T-cell (primary cell): ENCODE measurements at regions of chr20 and their contacts with region 1.

Region 1: DNA sequence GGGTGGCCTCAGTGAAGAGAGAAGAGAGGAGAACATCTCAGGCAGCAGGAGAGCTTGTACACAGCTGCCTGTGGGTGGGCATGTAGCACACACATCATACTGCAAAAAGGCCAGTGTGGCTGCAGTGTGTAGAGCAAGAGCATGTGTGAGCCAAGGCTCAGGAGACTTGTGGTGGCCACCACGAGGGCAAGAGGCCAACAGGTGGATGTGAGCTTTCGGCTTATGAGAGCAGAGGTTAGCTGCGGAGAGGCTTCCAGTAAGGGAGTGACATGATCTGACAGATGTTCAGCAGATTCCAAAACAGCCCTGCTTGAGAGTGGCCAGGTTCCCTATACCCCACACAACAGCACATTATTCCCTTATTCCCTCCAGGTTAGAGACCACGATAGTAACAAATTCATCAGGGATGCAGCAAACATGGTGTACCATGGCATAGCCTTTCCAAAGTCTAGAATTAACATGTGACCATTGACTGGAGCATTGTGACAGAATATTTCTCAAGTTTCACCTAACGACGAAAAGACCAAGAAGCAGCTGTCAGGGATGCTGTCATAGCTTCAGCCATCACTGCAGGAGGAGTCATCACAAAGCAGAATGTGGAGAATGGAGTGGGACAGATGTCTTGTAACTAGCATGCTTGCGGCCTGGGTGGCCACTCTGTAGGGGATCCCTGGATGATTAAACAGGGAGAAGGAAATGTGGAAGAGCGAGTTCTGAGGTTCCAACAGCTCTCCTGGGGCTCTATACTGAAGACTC is 23.1 kb downstream of the HM13 start:
- DNase-seq: no peak
- ATAC-seq: no peak
- H3K4me3 ChIP-seq: no peak overlapping the region
- H3K4me3 Mint-ChIP-seq: no peak overlapping the region
- H3K27ac ChIP-seq: no peak overlapping the region
- H3K27ac Mint-ChIP-seq: no peak overlapping the region
- H3K4me1 ChIP-seq: peaks cover 0 to 9% of the 10 kb centered on the region in 2 experiments
- H3K4me1 Mint-ChIP-seq: peaks cover 9 to 27% (median 18%) of the 10 kb centered on the region in 3 donors
- H3K27me3 ChIP-seq: no peaks in the 10 kb centered on the region
- H3K27me3 Mint-ChIP-seq: no peaks in the 10 kb centered on the region

Region 2: GRCh38 chr20:29878281-29878741 is 1659.0 kb before region 1 on chr20:
- CTCF ChIA-PET with region 1: no interaction called
- POLR2A ChIA-PET with region 1: interaction called in 1 of 2 experiments, 13 read pairs
- DNase-seq: no peak
- ATAC-seq: peak in 2 of 4 experiments; percentile 25 to 45
- H3K4me3 ChIP-seq: no peak overlapping the region
- H3K4me3 Mint-ChIP-seq: peak overlapping the region in 2 of 3 donors; percentile 3 to 41
- H3K27ac ChIP-seq: no peak overlapping the region
- H3K27ac Mint-ChIP-seq: no peak overlapping the region
- H3K4me1 ChIP-seq: no peaks in the 10 kb centered on the region
- H3K4me1 Mint-ChIP-seq: no peaks in the 10 kb centered on the region
- H3K27me3 ChIP-seq: peaks cover 0 to 9% of the 10 kb centered on the region in 2 experiments
- H3K27me3 Mint-ChIP-seq: peaks cover 0 to 1% of the 10 kb centered on the region in 2 donors

Region 3: DNA sequence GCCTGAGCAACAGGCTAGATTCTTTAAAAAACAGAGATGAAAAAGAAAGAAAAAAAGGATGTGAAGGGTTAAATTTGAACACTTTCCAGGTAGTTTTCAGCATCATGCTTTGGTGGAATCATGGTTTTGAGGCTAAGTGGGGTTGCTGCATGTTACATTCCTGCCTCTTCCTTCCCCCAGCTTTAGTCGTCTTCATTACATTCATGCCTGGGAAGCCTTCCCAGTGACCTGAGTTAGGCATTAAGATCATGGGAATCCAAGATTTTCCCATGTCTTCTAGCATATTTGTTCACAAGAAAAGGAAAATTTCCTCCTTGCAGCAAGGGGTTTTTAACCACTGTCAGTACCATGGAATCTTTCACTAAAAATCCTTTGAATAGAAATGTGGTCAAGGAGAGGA is 213.8 kb after region 1 on chr20:
- CTCF ChIA-PET with region 1: no interaction called
- POLR2A ChIA-PET with region 1: no interaction called
- DNase-seq: no peak
- ATAC-seq: no peak
- H3K4me3 ChIP-seq: no peak overlapping the region
- H3K4me3 Mint-ChIP-seq: no peak overlapping the region
- H3K27ac ChIP-seq: no peak overlapping the region
- H3K27ac Mint-ChIP-seq: no peak overlapping the region
- H3K4me1 ChIP-seq: no peaks in the 10 kb centered on the region
- H3K4me1 Mint-ChIP-seq: peaks cover 0 to 13% (median 3%) of the 10 kb centered on the region in 3 donors
- H3K27me3 ChIP-seq: no peaks in the 10 kb centered on the region
- H3K27me3 Mint-ChIP-seq: no peaks in the 10 kb centered on the region